ENCODE measurements at regions of chr17 and their contacts with region 1.

Region 1: GRCh38 chr17:63406689-63407330 is 39.3 kb downstream of the CYB561 start:
- DNase-seq: peak; percentile 35 to 85 (median 65)
- ATAC-seq: peak; percentile 87
- H3K4me3 ChIP-seq: no peak overlapping the region
- H3K4me3 Mint-ChIP-seq: no peak overlapping the region
- H3K27ac ChIP-seq: no peak overlapping the region
- H3K27ac Mint-ChIP-seq: no peak overlapping the region
- H3K4me1 ChIP-seq: no peaks in the 10 kb centered on the region
- H3K4me1 Mint-ChIP-seq: peaks cover 2% of the 10 kb centered on the region
- H3K27me3 ChIP-seq: no peaks in the 10 kb centered on the region
- H3K27me3 Mint-ChIP-seq: no peaks in the 10 kb centered on the region
- CTCF ChIP-seq: peak; percentile 83

Region 2: DNA sequence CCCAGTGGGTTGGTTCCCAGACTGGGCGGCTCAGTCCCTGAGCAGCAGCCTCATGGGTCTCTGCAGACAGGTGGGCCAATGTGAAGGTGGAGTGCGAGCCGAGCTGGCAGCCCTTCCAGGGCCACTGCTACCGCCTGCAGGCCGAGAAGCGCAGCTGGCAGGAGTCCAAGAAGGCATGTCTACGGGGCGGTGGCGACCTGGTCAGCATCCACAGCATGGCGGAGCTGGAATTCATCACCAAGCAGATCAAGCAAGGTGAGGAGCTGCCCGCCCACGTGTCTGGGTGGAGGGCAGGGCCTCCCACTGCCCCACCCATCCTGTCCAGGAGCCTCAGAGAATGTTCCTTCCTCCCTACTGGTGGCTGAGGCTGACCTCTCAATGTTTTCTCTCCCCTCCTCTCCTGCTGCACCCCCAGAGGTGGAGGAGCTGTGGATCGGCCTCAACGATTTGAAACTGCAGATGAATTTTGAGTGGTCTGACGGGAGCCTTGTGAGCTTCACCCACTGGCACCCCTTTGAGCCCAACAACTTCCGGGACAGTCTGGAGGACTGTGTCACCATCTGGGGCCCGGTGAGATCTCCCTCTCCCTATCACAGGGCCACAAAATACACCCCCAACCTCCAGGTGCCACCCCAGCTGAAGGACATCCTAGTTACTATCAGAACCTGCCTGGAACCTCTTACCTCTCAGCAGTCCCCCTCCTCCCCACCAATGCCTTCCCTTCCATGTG is 735.1 kb before region 1 on chr17:
- CTCF ChIA-PET with region 1: interaction called, 20 read pairs
- POLR2A ChIA-PET with region 1: no interaction called
- intact Hi-C with region 1: loop called in 1 of 2 experiments (anchors 1 kb)
- DNase-seq: no peak
- ATAC-seq: no peak
- H3K4me3 ChIP-seq: no peak overlapping the region
- H3K4me3 Mint-ChIP-seq: no peak overlapping the region
- H3K27ac ChIP-seq: no peak overlapping the region
- H3K27ac Mint-ChIP-seq: no peak overlapping the region
- H3K4me1 ChIP-seq: peaks cover 5% of the 10 kb centered on the region
- H3K4me1 Mint-ChIP-seq: peaks cover 8% of the 10 kb centered on the region
- H3K27me3 ChIP-seq: no peaks in the 10 kb centered on the region
- H3K27me3 Mint-ChIP-seq: no peaks in the 10 kb centered on the region
- CTCF ChIP-seq: no peak

Region 3: GRCh38 chr17:62968445-62968923 is 438.3 kb before region 1 on chr17:
- CTCF ChIA-PET with region 1: no interaction called
- POLR2A ChIA-PET with region 1: no interaction called
- intact Hi-C with region 1: loop called in 1 of 2 experiments (anchors 1 kb)
- DNase-seq: peak in 8 of 9 experiments; percentile 6 to 87 (median 54)
- ATAC-seq: peak; percentile 39
- H3K4me3 ChIP-seq: no peak overlapping the region
- H3K4me3 Mint-ChIP-seq: peak overlapping the region; percentile 40
- H3K27ac ChIP-seq: no peak overlapping the region
- H3K27ac Mint-ChIP-seq: peak overlapping the region; percentile 3
- H3K4me1 ChIP-seq: peaks cover 23% of the 10 kb centered on the region
- H3K4me1 Mint-ChIP-seq: peaks cover 36% of the 10 kb centered on the region
- H3K27me3 ChIP-seq: no peaks in the 10 kb centered on the region
- H3K27me3 Mint-ChIP-seq: no peaks in the 10 kb centered on the region
- CTCF ChIP-seq: peak; percentile 93

Region 4: GRCh38 chr17:63065820-63066813 is 340.7 kb before region 1 on chr17:
- CTCF ChIA-PET with region 1: no interaction called
- POLR2A ChIA-PET with region 1: no interaction called
- intact Hi-C with region 1: no loop called
- DNase-seq: no peak
- ATAC-seq: no peak
- H3K4me3 ChIP-seq: no peak overlapping the region
- H3K4me3 Mint-ChIP-seq: no peak overlapping the region
- H3K27ac ChIP-seq: no peak overlapping the region
- H3K27ac Mint-ChIP-seq: no peak overlapping the region
- H3K4me1 ChIP-seq: peaks cover 7% of the 10 kb centered on the region
- H3K4me1 Mint-ChIP-seq: peaks cover 19% of the 10 kb centered on the region
- H3K27me3 ChIP-seq: no peaks in the 10 kb centered on the region
- H3K27me3 Mint-ChIP-seq: no peaks in the 10 kb centered on the region
- CTCF ChIP-seq: no peak

Region 5: DNA sequence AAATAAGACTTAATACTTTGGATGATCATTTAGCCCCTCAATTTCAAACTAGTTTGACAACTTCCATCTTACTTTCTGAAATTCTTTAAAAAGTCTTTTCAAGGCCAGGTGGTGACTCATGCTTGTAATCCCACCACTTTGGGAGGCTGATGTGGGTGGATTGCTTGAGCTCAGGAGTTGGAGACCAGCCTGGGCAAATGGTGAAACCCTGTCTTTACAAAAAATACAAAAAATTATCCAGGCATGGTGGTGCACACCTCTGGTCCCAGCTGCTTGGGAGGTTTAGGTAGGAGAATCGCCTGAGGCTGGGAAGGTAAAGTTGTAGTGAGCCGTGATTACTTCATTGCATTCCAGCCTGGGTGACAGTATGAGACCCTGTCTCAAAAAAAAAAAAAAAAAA is 286.4 kb before region 1 on chr17:
- CTCF ChIA-PET with region 1: no interaction called
- POLR2A ChIA-PET with region 1: no interaction called
- intact Hi-C with region 1: no loop called
- DNase-seq: no peak
- ATAC-seq: no peak
- H3K4me3 ChIP-seq: no peak overlapping the region
- H3K4me3 Mint-ChIP-seq: no peak overlapping the region
- H3K27ac ChIP-seq: no peak overlapping the region
- H3K27ac Mint-ChIP-seq: no peak overlapping the region
- H3K4me1 ChIP-seq: no peaks in the 10 kb centered on the region
- H3K4me1 Mint-ChIP-seq: no peaks in the 10 kb centered on the region
- H3K27me3 ChIP-seq: no peaks in the 10 kb centered on the region
- H3K27me3 Mint-ChIP-seq: no peaks in the 10 kb centered on the region
- CTCF ChIP-seq: no peak

Region 6: GRCh38 chr17:63356337-63356757 is 50.5 kb before region 1 on chr17:
- CTCF ChIA-PET with region 1: no interaction called
- POLR2A ChIA-PET with region 1: no interaction called
- intact Hi-C with region 1: no loop called
- DNase-seq: no peak
- ATAC-seq: no peak
- H3K4me3 ChIP-seq: no peak overlapping the region
- H3K4me3 Mint-ChIP-seq: no peak overlapping the region
- H3K27ac ChIP-seq: no peak overlapping the region
- H3K27ac Mint-ChIP-seq: no peak overlapping the region
- H3K4me1 ChIP-seq: no peaks in the 10 kb centered on the region
- H3K4me1 Mint-ChIP-seq: no peaks in the 10 kb centered on the region
- H3K27me3 ChIP-seq: no peaks in the 10 kb centered on the region
- H3K27me3 Mint-ChIP-seq: no peaks in the 10 kb centered on the region
- CTCF ChIP-seq: no peak

Region 7: DNA sequence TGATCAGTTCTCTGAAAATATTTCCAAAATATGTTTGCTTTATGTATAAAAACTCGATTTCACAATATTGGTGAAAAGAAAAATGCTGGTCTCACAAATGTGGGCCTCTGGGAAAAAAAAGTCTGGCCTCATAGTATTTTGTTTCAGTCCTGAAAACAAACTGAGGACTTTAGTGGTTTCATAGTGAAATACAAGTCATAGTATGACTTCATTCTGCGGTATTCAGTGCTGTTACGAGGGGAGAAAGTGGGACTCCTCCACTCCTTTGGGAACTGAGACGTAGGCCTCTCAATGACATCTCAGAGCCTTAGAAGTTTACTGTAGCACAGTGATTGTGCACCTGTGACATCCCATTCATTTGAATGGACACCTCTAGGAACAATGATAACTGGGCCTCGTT is 16.7 kb before region 1 on chr17:
- CTCF ChIA-PET with region 1: interaction called, 16 read pairs
- POLR2A ChIA-PET with region 1: no interaction called
- intact Hi-C with region 1: no loop called
- DNase-seq: no peak
- ATAC-seq: no peak
- H3K4me3 ChIP-seq: no peak overlapping the region
- H3K4me3 Mint-ChIP-seq: no peak overlapping the region
- H3K27ac ChIP-seq: no peak overlapping the region
- H3K27ac Mint-ChIP-seq: no peak overlapping the region
- H3K4me1 ChIP-seq: no peaks in the 10 kb centered on the region
- H3K4me1 Mint-ChIP-seq: no peaks in the 10 kb centered on the region
- H3K27me3 ChIP-seq: no peaks in the 10 kb centered on the region
- H3K27me3 Mint-ChIP-seq: no peaks in the 10 kb centered on the region
- CTCF ChIP-seq: no peak

Region 8: DNA sequence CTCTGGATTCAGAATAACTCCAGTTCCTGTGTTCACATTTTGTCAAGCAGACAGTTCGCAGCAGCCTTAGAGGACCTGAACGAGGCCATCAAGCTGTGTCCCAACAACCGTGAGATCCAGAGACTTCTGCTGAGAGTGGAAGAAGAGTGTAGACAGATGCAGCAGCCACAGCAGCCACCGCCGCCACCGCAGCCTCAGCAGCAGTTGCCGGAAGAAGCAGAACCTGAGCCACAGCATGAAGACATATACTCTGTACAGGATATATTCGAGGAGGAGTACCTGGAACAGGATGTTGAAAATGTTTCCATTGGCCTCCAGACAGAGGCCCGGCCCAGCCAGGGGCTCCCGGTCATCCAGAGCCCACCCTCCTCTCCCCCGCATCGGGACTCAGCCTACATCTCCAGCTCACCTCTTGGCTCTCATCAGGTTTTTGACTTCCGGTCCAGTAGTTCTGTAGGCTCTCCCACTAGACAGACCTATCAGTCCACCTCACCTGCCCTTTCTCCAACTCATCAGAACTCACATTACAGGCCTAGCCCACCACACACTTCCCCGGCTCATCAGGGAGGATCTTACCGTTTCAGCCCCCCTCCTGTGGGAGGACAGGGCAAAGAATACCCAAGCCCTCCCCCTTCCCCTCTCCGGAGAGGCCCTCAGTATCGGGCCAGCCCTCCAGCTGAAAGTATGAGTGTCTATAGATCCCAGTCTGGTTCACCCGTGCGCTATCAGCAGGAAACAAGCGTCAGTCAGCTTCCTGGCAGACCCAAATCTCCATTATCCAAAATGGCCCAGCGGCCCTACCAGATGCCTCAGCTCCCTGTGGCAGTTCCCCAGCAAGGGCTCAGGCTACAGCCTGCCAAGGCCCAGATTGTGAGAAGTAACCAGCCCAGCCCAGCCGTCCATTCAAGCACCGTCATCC is 13.4 kb after region 1 on chr17:
- CTCF ChIA-PET with region 1: interaction called, 26 read pairs
- POLR2A ChIA-PET with region 1: interaction called, 4 read pairs
- intact Hi-C with region 1: no loop called
- DNase-seq: peak in 7 of 9 experiments; percentile 14 to 66 (median 40)
- ATAC-seq: peak; percentile 85
- H3K4me3 ChIP-seq: no peak overlapping the region
- H3K4me3 Mint-ChIP-seq: peak overlapping the region; percentile 51
- H3K27ac ChIP-seq: no peak overlapping the region
- H3K27ac Mint-ChIP-seq: peak overlapping the region; percentile 79
- H3K4me1 ChIP-seq: peaks cover 14% of the 10 kb centered on the region
- H3K4me1 Mint-ChIP-seq: peaks cover 21% of the 10 kb centered on the region
- H3K27me3 ChIP-seq: no peaks in the 10 kb centered on the region
- H3K27me3 Mint-ChIP-seq: no peaks in the 10 kb centered on the region
- CTCF ChIP-seq: no peak

Region 9: DNA sequence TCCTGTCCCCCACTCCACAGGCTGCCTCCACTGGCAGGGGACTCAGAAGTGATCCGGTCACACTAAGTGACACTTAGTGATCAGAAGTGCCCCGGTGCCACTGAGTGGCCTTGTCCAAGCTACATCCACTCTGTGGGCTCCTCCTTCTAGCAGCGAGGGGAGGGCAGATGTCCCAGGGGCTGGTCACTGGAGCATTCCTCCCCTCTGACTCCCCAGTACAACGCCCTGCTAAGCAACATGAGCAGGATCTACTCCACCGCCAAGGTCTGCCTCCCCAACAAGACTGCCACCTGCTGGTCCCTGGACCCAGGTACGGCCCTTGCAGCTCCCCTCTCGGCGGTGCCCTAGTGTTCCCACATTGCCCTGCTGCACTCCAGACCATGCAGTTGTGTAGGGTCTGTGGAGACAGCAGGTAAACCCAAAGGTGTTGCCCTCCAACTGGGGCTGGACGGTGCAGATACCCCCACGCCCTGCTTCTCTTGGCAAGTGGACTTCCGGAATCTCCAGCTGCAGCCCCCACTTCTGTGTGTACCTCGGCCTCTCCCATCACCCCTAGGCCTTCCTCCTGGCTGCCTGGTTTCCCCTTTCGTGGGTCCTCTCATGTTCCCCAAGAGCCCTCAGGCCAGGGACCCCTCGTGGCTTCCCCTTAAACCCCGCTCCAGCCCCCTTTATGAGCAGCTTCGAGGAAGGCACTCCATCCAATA is 72.1 kb after region 1 on chr17:
- CTCF ChIA-PET with region 1: interaction called, 19 read pairs
- POLR2A ChIA-PET with region 1: no interaction called
- intact Hi-C with region 1: no loop called
- DNase-seq: peak; percentile 60 to 84 (median 78)
- ATAC-seq: peak; percentile 81
- H3K4me3 ChIP-seq: no peak overlapping the region
- H3K4me3 Mint-ChIP-seq: peak overlapping the region; percentile 57
- H3K27ac ChIP-seq: no peak overlapping the region
- H3K27ac Mint-ChIP-seq: no peak overlapping the region
- H3K4me1 ChIP-seq: peaks cover 14% of the 10 kb centered on the region
- H3K4me1 Mint-ChIP-seq: peaks cover 11% of the 10 kb centered on the region
- H3K27me3 ChIP-seq: peaks cover 14% of the 10 kb centered on the region in 2 experiments
- H3K27me3 Mint-ChIP-seq: peaks cover 26% of the 10 kb centered on the region
- CTCF ChIP-seq: peak; percentile 61